Ascending aorta (tissue), 2 donors: ENCODE measurements at regions of chr6 and their contacts with region 1.

Region 1: GRCh38 chr6:19736066-19736465 is 101.1 kb upstream of the ID4 start:
- DNase-seq: no peak
- H3K4me3 ChIP-seq: no peak overlapping the region
- H3K27ac ChIP-seq: no peak overlapping the region
- H3K4me1 ChIP-seq: peaks cover 0 to 2% of the 10 kb centered on the region in 2 donors
- H3K27me3 ChIP-seq: no peaks in the 10 kb centered on the region
- CTCF ChIP-seq: no peak

Region 2: GRCh38 chr6:19638931-19639330 is 97.1 kb before region 1 on chr6:
- intact Hi-C with region 1: no loop called
- DNase-seq: no peak
- H3K4me3 ChIP-seq: no peak overlapping the region
- H3K27ac ChIP-seq: no peak overlapping the region
- H3K4me1 ChIP-seq: no peaks in the 10 kb centered on the region
- H3K27me3 ChIP-seq: no peaks in the 10 kb centered on the region
- CTCF ChIP-seq: no peak

Region 3: DNA sequence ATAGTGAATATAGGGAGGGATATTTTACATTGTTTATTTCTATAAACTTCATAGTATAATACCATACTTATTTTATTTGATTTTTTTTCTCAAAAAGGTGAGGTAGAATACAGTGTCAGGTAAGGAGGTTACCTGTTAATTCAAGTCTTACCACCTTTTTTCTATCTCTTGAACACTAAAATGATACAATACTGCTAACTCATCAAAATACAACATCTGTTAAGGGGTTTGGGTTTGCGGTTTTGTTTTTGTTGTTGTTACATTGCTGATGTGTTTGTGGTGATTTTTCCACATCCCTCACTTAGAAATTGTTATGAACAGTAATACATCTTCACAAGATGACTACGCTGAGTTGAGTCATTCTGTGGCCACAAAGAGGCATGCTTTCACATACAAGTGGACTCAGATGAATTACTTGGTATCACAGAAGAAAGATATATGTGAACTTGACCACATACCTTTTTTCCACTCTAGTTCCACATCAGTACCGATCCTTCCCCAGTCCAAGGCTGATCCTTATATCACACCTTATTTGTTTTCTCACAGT is 38.2 kb before region 1 on chr6:
- intact Hi-C with region 1: no loop called
- DNase-seq: no peak
- H3K4me3 ChIP-seq: no peak overlapping the region
- H3K27ac ChIP-seq: no peak overlapping the region
- H3K4me1 ChIP-seq: no peaks in the 10 kb centered on the region
- H3K27me3 ChIP-seq: no peaks in the 10 kb centered on the region
- CTCF ChIP-seq: no peak

Region 4: GRCh38 chr6:19781269-19781668 is 45.2 kb after region 1 on chr6:
- intact Hi-C with region 1: loop called (anchors 5 kb)
- DNase-seq: no peak
- H3K4me3 ChIP-seq: no peak overlapping the region
- H3K27ac ChIP-seq: no peak overlapping the region
- H3K4me1 ChIP-seq: no peaks in the 10 kb centered on the region
- H3K27me3 ChIP-seq: no peaks in the 10 kb centered on the region
- CTCF ChIP-seq: no peak

Region 5: DNA sequence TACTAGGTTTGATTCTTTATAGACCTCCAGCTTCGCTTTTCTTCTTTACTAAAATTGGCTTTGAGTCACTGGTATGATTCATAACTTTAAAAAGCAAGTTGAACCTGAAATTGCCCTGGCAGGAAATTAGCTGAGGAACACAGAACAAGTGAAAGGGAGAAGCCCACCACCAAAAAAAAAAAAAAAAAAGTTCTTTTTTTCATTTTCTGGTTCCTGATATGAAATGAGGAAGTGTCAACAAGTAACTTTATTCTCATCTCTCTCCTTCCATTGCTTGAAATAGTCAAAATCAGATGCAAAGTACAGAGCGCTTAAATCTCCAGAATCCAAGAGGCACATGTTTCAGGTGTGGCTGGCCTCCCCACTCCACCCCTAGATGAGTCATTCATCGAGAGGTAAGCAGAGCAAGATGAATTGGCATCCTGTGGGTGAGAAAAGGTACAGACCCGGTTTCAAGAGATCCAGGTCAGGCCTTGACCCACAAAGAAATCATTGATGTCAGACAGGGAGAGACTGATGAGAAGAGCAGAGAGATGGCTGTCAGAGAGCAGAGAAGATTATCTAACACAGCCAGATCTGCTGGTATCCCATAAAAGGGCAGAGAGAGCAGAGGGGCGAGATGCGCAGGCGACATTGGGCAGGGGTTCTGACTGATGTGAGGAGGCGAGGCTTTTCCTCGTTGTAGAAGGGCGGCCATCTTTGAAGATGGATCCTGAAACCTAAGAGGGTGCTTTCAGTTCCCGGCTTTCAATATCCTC is 531.0 kb after region 1 on chr6:
- intact Hi-C with region 1: no loop called
- DNase-seq: no peak
- H3K4me3 ChIP-seq: no peak overlapping the region
- H3K27ac ChIP-seq: no peak overlapping the region
- H3K4me1 ChIP-seq: peaks cover 0 to 3% of the 10 kb centered on the region in 2 donors
- H3K27me3 ChIP-seq: no peaks in the 10 kb centered on the region
- CTCF ChIP-seq: no peak